PC-3 (cell line): ENCODE measurements at regions of chr2 and their contacts with region 1.

Region 1: GRCh38 chr2:36597532-36598377 is at the start of gene FEZ2:
- DNase-seq: peak; percentile 85
- ATAC-seq: peak; percentile 95
- H3K4me3 ChIP-seq: peak within 1 kb of the TSS; percentile 89
- H3K27ac ChIP-seq: peak within 1 kb of the TSS; percentile 43
- H3K4me1 ChIP-seq: peaks cover 20% of the 10 kb centered on the region
- H3K27me3 ChIP-seq: no peaks in the 10 kb centered on the region
- CTCF ChIP-seq: no peak
- total RNA-seq, gene FEZ2: 52.6 and 62.1 TPM in 2 replicates

Region 2: GRCh38 chr2:36478332-36478738 is 119.4 kb before region 1 on chr2:
- CTCF ChIA-PET with region 1: no interaction called
- POLR2A ChIA-PET with region 1: no interaction called
- intact Hi-C with region 1: no loop called
- DNase-seq: peak; percentile 96
- ATAC-seq: peak; percentile 83
- H3K4me3 ChIP-seq: no peak overlapping the region
- H3K27ac ChIP-seq: peak overlapping the region; percentile 68
- H3K4me1 ChIP-seq: peaks cover 46% of the 10 kb centered on the region
- H3K27me3 ChIP-seq: no peaks in the 10 kb centered on the region
- CTCF ChIP-seq: no peak

Region 3: DNA sequence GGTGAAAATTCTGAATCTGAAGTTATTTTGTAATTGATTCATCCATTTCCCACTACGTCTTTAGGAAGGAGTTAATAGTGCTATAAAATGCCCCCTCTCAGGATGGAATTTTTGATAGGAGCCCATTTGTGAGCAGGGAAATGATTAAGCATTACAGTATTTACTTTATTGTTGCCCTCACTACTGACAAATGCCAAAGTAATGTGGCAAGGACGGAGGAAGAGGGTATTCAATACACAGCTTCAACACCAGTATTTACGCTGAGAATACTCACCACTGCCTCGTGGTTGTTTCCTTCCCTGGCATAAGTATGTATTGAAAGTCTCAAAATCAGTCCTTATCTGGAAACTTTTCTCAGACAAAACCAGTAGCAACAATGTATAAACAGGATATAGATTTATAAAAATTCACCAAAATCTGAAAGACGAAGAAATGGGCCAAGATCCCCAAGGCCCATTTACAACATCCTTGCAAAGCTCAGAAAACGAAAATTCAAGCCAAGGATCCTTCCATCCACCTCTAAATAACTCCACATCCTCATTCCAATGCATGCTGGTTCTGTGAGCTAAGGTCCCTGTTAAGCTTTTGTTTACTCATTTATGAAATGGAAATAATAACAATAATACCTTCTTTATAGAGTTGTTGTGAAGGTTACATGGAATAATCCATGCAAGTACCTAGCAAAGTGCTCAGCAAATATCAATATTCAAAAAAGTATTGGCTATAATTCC is 29.1 kb before region 1 on chr2:
- CTCF ChIA-PET with region 1: no interaction called
- POLR2A ChIA-PET with region 1: interaction called, 10 read pairs
- intact Hi-C with region 1: loop called (anchors 1 kb)
- DNase-seq: peak; percentile 94
- ATAC-seq: peak; percentile 70
- H3K4me3 ChIP-seq: peak overlapping the region; percentile 60
- H3K27ac ChIP-seq: peak overlapping the region; percentile 99
- H3K4me1 ChIP-seq: peaks cover 86% of the 10 kb centered on the region
- H3K27me3 ChIP-seq: no peaks in the 10 kb centered on the region
- CTCF ChIP-seq: no peak